ENCODE measurements at regions of chr1 and their contacts with region 1.

Region 1: DNA sequence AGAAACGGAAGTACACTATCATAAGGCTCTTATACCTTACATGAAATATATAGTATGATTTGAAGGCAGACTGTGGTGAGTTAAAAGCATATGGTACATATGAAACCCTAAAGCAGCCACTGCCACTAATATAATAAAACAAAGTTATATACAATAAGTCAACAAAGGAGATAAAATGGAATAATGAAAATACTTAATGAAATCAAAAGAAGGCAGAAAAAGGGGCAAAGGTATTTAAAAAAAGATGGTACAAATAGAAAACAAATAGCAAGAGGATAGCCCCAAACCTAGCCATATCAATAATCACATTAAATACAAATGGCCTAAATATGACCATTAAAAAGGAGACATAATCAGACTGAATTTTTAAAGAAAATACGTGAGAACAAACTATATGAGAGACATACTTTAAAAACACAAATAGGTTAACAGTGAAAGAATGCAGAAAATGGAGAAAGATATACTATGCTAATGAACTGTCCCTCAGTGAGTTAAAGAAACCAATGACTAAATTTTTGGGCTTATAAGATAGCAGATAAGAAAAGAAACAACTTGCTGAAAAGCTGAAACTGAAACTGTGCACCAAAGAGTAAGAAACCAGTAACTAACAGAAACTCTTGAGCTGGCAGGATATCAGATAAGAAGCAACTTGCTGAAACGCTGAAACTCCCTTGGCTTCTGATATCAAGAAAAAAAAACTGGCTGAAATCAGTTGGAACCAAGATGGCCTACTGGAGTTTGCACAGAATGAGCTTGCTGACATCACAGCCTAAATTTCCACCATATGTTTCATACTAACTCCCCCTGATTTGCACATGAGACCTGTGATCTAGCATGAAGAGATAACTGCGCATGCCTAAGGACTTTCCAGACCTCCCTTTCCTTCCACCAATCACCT is 44.3 kb upstream of the IL10 start:
- DNase-seq: peak; percentile 41
- H3K4me3 Mint-ChIP-seq: peak overlapping the region; percentile 47
- H3K27ac Mint-ChIP-seq: peak overlapping the region; percentile 88
- H3K4me1 Mint-ChIP-seq: peaks cover 43% of the 10 kb centered on the region
- H3K27me3 Mint-ChIP-seq: no peaks in the 10 kb centered on the region

Region 2: GRCh38 chr1:206784471-206784903 is 32.2 kb before region 1 on chr1:
- intact Hi-C with region 1: loop called (anchors 1 kb)
- DNase-seq: peak; percentile 87
- H3K4me3 Mint-ChIP-seq: peak overlapping the region; percentile 72
- H3K27ac Mint-ChIP-seq: peak overlapping the region; percentile 93
- H3K4me1 Mint-ChIP-seq: peaks cover 69% of the 10 kb centered on the region
- H3K27me3 Mint-ChIP-seq: peaks cover 14% of the 10 kb centered on the region

Region 3: GRCh38 chr1:206797534-206798383 is 18.9 kb before region 1 on chr1:
- intact Hi-C with region 1: no loop called
- DNase-seq: no peak
- H3K4me3 Mint-ChIP-seq: no peak overlapping the region
- H3K27ac Mint-ChIP-seq: no peak overlapping the region
- H3K4me1 Mint-ChIP-seq: peaks cover 80% of the 10 kb centered on the region
- H3K27me3 Mint-ChIP-seq: peaks cover 28% of the 10 kb centered on the region

Region 4: GRCh38 chr1:206828765-206829164 is 12.1 kb after region 1 on chr1:
- intact Hi-C with region 1: loop called (anchors 1 kb)
- DNase-seq: no peak
- H3K4me3 Mint-ChIP-seq: no peak overlapping the region
- H3K27ac Mint-ChIP-seq: no peak overlapping the region
- H3K4me1 Mint-ChIP-seq: peaks cover 44% of the 10 kb centered on the region
- H3K27me3 Mint-ChIP-seq: peaks cover 7% of the 10 kb centered on the region

Region 5: DNA sequence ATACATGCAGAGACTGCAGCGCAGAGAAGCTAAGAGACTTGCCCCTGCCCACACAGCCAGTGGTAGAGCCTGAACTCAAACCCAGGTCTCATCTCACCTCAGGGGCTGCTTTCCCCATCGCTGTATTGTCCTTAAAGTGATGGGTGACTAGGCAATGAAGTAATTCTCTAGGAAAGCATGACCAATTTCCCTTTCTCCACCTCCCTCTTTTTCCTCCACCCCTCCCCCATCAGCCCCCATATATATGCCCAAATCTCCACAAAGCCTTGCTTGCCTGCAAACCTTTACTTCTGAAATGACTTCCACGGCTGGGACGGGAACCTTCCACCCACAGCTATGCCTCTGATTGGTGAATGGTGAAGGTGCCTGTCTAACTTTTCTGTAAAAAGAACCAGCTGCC is 80.5 kb after region 1 on chr1 and contains the start of gene IL24:
- intact Hi-C with region 1: loop called (anchors 1 kb)
- DNase-seq: no peak
- H3K4me3 Mint-ChIP-seq: peak within 1 kb of the TSS; percentile 73
- H3K27ac Mint-ChIP-seq: peak within 1 kb of the TSS; percentile 84
- H3K4me1 Mint-ChIP-seq: peaks cover 61% of the 10 kb centered on the region
- H3K27me3 Mint-ChIP-seq: no peaks in the 10 kb centered on the region
- total RNA-seq, gene IL24: 4.4 and 6.8 TPM in 2 replicates

Region 6: GRCh38 chr1:207040181-207040533 is 223.5 kb after region 1 on chr1:
- intact Hi-C with region 1: no loop called
- DNase-seq: no peak
- H3K4me3 Mint-ChIP-seq: no peak overlapping the region
- H3K27ac Mint-ChIP-seq: no peak overlapping the region
- H3K4me1 Mint-ChIP-seq: peaks cover 7% of the 10 kb centered on the region
- H3K27me3 Mint-ChIP-seq: peaks cover 4% of the 10 kb centered on the region

Measured in activated T-helper 1 cell treated with anti-CD3 and anti-CD28 coated beads, Interleukin-12 subunit alpha, Interleukin-12 subunit beta, Interleukin-2, Interleukin-4 antibody, amounts not matched to agents 30 ng/mL and 10 ng/mL and 1 ng/mL, durations not matched to agents 14 hours and 24 hours and 36 hours (primary cell).